ENCODE measurements at regions of chr18 and their contacts with region 1.

Region 1: GRCh38 chr18:12657684-12658425 is at the start of gene SPIRE1:
- DNase-seq: peak; percentile 51 to 96 (median 73)

Region 2: DNA sequence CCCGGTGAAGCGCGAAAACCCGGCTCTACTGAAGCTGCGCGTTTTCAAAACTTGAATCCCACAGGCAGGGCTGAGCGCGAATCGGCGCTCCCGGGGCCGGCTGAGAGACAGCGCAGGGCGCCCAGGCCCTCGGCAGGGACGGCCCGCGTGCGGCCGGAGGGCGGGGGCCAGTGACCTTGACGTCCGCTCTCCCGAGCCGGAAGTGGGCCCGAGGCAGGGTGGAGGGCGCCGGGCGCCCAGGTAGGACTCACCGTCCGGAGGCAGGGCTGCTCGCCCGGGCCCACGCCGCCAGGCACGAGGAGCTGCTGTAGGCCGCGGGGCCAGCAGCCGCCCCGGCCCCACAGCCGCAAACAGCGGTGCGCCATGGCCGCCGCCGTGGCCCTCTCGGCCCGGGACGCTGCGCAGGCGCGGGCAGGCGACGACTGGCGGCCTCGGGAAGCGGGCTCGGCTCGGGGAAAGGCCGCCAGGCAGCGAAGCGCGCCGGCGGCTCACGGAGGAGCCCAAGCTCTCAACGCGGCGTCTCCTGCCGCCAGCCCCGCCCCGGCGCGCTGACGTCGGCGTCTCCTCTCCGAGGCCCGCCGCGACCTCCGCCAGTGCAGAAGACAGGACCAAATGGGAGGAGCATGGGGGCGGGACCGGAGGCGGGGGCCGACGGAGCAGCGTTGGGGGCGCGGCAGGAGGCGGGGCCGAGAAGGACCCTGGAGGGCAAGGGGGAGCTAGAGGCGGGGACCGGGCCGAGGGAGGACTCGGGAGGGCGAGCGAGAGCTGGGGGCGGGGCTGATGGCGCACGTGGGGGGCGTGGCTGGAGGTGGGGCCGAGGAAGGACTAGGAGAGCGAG is 280.9 kb before region 1 on chr18 and contains the start of gene AFG3L2:
- intact Hi-C with region 1: loop called (anchors 1 kb)
- DNase-seq: peak; percentile 99 to 100 (median 100)

Region 3: GRCh38 chr18:12391618-12392165 is 266.2 kb before region 1 on chr18:
- intact Hi-C with region 1: loop called (anchors 1 kb)
- DNase-seq: peak; percentile 29 to 92 (median 70)

Region 4: GRCh38 chr18:12408247-12408869 is 249.5 kb before region 1 on chr18:
- intact Hi-C with region 1: loop called (anchors 5 kb)
- DNase-seq: peak in 3 of 10 donors; percentile 21 to 87 (median 85)

Region 5: GRCh38 chr18:12455496-12455895 is 202.4 kb before region 1 on chr18:
- intact Hi-C with region 1: loop called (anchors 5 kb)
- DNase-seq: peak; percentile 81 to 98 (median 91)

Region 6: GRCh38 chr18:12531749-12532148 is 126.1 kb before region 1 on chr18:
- intact Hi-C with region 1: loop called (anchors 10 kb)
- DNase-seq: no peak

Region 7: DNA sequence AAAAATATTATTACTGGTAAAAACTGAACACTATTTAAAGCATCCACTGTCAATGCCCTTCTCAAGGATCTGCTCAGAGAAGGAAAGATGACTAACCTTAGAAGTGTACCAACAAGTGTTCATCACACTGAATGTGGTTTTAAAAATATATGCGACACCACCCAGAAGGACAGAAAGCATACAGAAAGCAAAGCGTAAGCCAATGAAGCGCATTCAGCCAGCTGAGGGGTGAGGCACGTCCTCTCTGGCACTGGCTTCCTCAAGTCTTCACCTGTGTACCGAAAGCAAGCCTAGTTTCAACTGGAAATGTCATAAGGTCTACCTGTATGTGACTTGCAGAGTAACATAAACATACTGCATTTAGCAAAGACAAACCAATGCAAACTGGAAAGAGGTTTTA is 133.8 kb after region 1 on chr18:
- intact Hi-C with region 1: no loop called
- DNase-seq: no peak